ENCODE measurements at regions of chr13 and their contacts with region 1.

Region 1: GRCh38 chr13:77026818-77027585 is at the start of gene FBXL3:
- DNase-seq: peak; percentile 76
- H3K4me3 Mint-ChIP-seq: peak within 1 kb of the TSS; percentile 98
- H3K27ac Mint-ChIP-seq: peak within 1 kb of the TSS; percentile 95
- H3K4me1 Mint-ChIP-seq: peaks cover 51% of the 10 kb centered on the region
- H3K27me3 Mint-ChIP-seq: no peaks in the 10 kb centered on the region
- total RNA-seq, gene FBXL3: 38.2 and 44.4 TPM in 2 replicates

Region 2: GRCh38 chr13:76991796-76992547 is 35.0 kb before region 1 on chr13 and contains the start of gene CLN5:
- intact Hi-C with region 1: loop called (anchors 1 kb)
- DNase-seq: peak; percentile 95
- H3K4me3 Mint-ChIP-seq: peak within 1 kb of the TSS; percentile 89
- H3K27ac Mint-ChIP-seq: peak within 1 kb of the TSS; percentile 90
- H3K4me1 Mint-ChIP-seq: peaks cover 34% of the 10 kb centered on the region
- H3K27me3 Mint-ChIP-seq: peaks cover 1% of the 10 kb centered on the region
- total RNA-seq, gene CLN5: 13.5 and 15.8 TPM in 2 replicates

Region 3: GRCh38 chr13:77014906-77015685 is 11.9 kb before region 1 on chr13:
- intact Hi-C with region 1: loop called (anchors 1 kb)
- DNase-seq: no peak
- H3K4me3 Mint-ChIP-seq: no peak overlapping the region
- H3K27ac Mint-ChIP-seq: no peak overlapping the region
- H3K4me1 Mint-ChIP-seq: peaks cover 28% of the 10 kb centered on the region
- H3K27me3 Mint-ChIP-seq: no peaks in the 10 kb centered on the region

Region 4: GRCh38 chr13:77298426-77298825 is 271.4 kb after region 1 on chr13:
- intact Hi-C with region 1: loop called (anchors 10 kb)
- DNase-seq: no peak
- H3K4me3 Mint-ChIP-seq: no peak overlapping the region
- H3K27ac Mint-ChIP-seq: no peak overlapping the region
- H3K4me1 Mint-ChIP-seq: peaks cover 22% of the 10 kb centered on the region
- H3K27me3 Mint-ChIP-seq: no peaks in the 10 kb centered on the region

Region 5: GRCh38 chr13:77697217-77698103 is 670.5 kb after region 1 on chr13 and contains the start of gene SLAIN1:
- intact Hi-C with region 1: loop called (anchors 2 kb)
- DNase-seq: peak; percentile 75
- H3K4me3 Mint-ChIP-seq: peak within 1 kb of the TSS; percentile 98
- H3K27ac Mint-ChIP-seq: peak within 1 kb of the TSS; percentile 54
- H3K4me1 Mint-ChIP-seq: peaks cover 34% of the 10 kb centered on the region
- H3K27me3 Mint-ChIP-seq: peaks cover 26% of the 10 kb centered on the region
- total RNA-seq, gene SLAIN1: 33.3 and 35.9 TPM in 2 replicates